PC-3 (cell line): ENCODE measurements at regions of chr7 and their contacts with region 1.

Region 1: GRCh38 chr7:19964246-19964645 is 190.8 kb upstream of the TMEM196 start:
- DNase-seq: no peak
- ATAC-seq: no peak
- H3K4me3 ChIP-seq: no peak overlapping the region
- H3K27ac ChIP-seq: no peak overlapping the region
- H3K4me1 ChIP-seq: peaks cover 4% of the 10 kb centered on the region
- H3K27me3 ChIP-seq: no peaks in the 10 kb centered on the region
- CTCF ChIP-seq: no peak

Region 2: DNA sequence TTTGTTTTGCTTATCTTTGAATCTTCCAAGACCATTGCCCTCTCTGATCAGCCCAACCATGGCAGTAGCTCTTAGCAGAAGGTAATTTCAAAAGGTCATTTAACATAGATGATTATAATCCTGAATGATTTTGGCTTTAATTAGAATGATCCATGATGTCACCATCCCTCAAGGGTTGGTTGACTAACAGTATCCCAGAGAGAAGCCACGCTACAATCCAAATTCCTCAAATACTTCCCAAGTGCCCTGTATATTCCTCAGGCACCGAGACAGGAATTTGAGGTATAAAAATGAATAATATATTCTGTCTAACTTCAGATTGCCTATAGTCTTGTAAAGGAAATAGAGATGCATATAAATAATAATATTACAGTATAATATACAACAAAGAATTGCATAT is 148.7 kb before region 1 on chr7:
- CTCF ChIA-PET with region 1: interaction called, 23 read pairs
- POLR2A ChIA-PET with region 1: no interaction called
- intact Hi-C with region 1: no loop called
- DNase-seq: no peak
- ATAC-seq: no peak
- H3K4me3 ChIP-seq: no peak overlapping the region
- H3K27ac ChIP-seq: no peak overlapping the region
- H3K4me1 ChIP-seq: no peaks in the 10 kb centered on the region
- H3K27me3 ChIP-seq: no peaks in the 10 kb centered on the region
- CTCF ChIP-seq: no peak

Region 3: DNA sequence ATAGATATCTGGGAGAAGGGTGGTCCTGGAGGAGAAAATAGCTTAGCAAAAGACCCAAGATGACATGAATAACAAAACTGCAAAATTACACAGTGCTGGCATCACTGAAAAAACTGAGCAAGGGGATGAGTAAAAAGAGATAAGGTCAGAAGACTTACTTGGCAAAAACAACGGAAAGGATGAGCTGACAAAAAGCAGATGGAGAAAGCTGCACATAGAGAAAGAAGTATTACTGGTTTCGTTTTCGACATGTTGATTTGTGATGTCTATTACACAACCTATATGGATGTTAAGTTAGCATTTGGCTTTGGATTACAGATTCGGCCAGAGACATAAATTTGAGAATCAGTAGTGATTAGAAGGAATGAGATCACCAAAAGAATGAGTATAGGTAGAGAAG is 120.8 kb after region 1 on chr7:
- CTCF ChIA-PET with region 1: no interaction called
- POLR2A ChIA-PET with region 1: no interaction called
- intact Hi-C with region 1: no loop called
- DNase-seq: no peak
- ATAC-seq: no peak
- H3K4me3 ChIP-seq: no peak overlapping the region
- H3K27ac ChIP-seq: no peak overlapping the region
- H3K4me1 ChIP-seq: peaks cover 4% of the 10 kb centered on the region; the same call in 1 of the 2 replicates
- H3K27me3 ChIP-seq: no peaks in the 10 kb centered on the region
- CTCF ChIP-seq: no peak